Heart right ventricle (tissue), 16 donors: ENCODE measurements at regions of chr6 and their contacts with region 1.

Region 1: DNA sequence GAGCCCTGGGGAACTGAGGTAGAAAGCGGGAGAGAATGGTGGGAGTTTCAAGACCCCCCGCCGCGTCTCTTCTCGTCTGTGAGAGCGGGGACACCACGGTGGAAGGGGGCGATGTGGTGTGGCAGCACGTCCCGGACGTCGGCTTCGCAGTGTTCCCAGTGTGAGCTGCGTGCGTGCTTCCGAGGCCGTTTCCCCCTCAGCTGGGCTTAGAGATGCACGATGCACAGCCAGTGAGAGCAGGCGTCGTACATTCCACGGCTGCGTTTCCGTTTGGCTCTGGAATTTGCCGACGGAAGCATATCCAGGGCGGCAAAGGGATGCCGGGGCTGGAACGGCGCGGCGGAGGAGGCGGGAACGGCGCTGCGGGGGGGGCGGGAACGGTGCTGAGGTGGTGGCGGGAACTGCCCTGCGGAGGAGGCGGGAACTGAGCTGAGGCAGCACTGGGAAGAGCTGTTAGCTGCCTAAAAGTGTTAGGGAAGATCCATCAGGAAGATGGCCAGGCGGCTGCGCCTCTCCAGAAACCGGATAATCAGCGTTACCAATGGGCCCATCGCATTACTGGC is 37.7 kb downstream of the KIF25 start:
- DNase-seq: peak; percentile 74 to 84
- ATAC-seq: peak; percentile 55 to 77 (median 69)
- H3K4me3 ChIP-seq: peak overlapping the region in 9 of 10 donors; percentile 23 to 58 (median 45)
- H3K27ac ChIP-seq: peak overlapping the region; percentile 79 to 96 (median 86)
- H3K4me1 ChIP-seq: peaks cover 0 to 78% (median 61%) of the 10 kb centered on the region in 9 donors
- H3K27me3 ChIP-seq: peaks cover 0 to 18% (median 0%) of the 10 kb centered on the region in 7 donors
- CTCF ChIP-seq: no peak

Region 2: GRCh38 chr6:167932468-167933276 is 102.5 kb before region 1 on chr6:
- intact Hi-C with region 1: loop called in 4 of 10 experiments (anchors 2 to 10 kb)
- DNase-seq: no peak
- ATAC-seq: no peak
- H3K4me3 ChIP-seq: no peak overlapping the region
- H3K27ac ChIP-seq: peak overlapping the region in 7 of 10 donors; percentile 11 to 91 (median 81)
- H3K4me1 ChIP-seq: peaks cover 0 to 27% (median 23%) of the 10 kb centered on the region in 9 donors
- H3K27me3 ChIP-seq: no peaks in the 10 kb centered on the region
- CTCF ChIP-seq: no peak

Region 3: DNA sequence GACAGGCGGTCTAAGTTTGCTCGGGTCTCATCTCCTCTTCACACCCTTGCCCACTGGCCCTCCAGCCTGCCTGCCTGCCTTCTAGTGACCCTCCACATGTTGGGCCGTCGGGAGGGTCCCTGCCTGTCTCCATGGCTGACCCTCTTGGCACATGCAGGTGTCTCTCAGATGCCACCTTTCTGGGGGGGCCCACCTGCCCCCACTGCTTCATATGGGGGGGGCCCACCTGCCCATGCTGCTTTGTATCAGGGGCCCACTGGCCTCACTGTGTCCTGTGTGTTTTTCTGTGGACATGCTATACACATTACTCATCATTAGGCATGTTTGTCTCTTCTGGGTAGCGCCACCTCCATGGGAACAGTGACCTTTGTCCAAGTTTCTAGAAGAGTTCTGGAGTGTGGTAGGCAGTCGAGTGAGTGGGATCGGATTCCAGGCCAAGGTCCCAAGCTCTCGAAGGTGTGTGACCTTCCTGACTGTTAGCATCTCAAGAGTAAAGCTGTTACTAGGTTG is 78.1 kb before region 1 on chr6:
- intact Hi-C with region 1: loop called in 1 of 10 experiments (anchors 10 kb)
- DNase-seq: no peak
- ATAC-seq: peak in 7 of 8 donors; percentile 22 to 82 (median 62)
- H3K4me3 ChIP-seq: no peak overlapping the region
- H3K27ac ChIP-seq: peak overlapping the region in 2 of 10 donors; percentile 11 to 32
- H3K4me1 ChIP-seq: peaks cover 0 to 69% (median 24%) of the 10 kb centered on the region in 9 donors
- H3K27me3 ChIP-seq: no peaks in the 10 kb centered on the region
- CTCF ChIP-seq: no peak

Region 4: GRCh38 chr6:167968091-167968490 is 67.1 kb before region 1 on chr6:
- intact Hi-C with region 1: loop called in 4 of 10 experiments (anchors 2 to 5 kb)
- DNase-seq: no peak
- ATAC-seq: no peak
- H3K4me3 ChIP-seq: no peak overlapping the region
- H3K27ac ChIP-seq: peak overlapping the region in 1 of 10 donors; percentile 73
- H3K4me1 ChIP-seq: peaks cover 5 to 48% (median 14%) of the 10 kb centered on the region in 9 donors
- H3K27me3 ChIP-seq: no peaks in the 10 kb centered on the region
- CTCF ChIP-seq: peak in 8 of 9 donors; percentile 13 to 52 (median 44)

Region 5: GRCh38 chr6:167974640-167975344 is 60.4 kb before region 1 on chr6:
- intact Hi-C with region 1: loop called in 4 of 10 experiments (anchors 2 to 5 kb)
- DNase-seq: no peak
- ATAC-seq: peak in 5 of 8 donors; percentile 14 to 35 (median 18)
- H3K4me3 ChIP-seq: no peak overlapping the region
- H3K27ac ChIP-seq: peak overlapping the region in 1 of 10 donors; percentile 7
- H3K4me1 ChIP-seq: peaks cover 0 to 24% (median 8%) of the 10 kb centered on the region in 9 donors
- H3K27me3 ChIP-seq: no peaks in the 10 kb centered on the region
- CTCF ChIP-seq: no peak

Region 6: DNA sequence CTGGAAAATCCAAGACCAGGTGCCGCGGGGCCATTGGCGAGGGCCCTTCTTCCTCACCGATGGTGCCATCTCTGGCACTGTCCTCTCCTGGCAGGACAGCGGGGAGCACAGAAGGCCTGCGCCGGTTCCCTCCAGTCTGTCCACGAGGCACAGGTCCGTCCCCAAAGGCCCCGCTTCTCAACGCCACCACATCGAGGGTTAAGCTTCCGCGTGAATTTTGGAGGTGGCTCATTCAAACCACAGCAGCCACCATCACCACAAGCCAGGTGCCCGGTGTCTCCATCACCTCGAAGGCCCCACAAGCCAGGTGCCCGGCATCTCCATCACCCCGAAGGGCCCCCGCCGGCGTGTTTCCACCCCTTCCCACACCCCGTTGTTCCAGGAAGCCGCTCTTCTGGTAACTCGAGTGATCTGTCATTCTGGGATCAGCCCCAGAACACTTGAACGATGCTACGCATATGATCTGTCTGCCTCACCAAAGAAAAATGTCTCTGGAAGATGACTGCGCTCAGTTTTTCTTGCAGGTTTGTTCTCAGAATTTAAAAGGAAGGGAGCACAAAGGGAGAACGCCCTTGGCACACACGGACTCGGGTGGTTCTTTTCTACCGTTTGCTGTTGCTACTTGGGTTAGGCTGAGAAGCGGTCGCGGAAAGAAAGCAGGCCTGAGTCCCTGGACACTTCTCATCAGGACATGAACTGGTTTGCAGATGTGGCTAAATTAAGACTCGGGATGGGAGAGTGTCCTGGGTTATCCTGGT is 47.6 kb before region 1 on chr6:
- intact Hi-C with region 1: loop called in 4 of 10 experiments (anchors 2 to 5 kb)
- DNase-seq: no peak
- ATAC-seq: peak in 6 of 8 donors; percentile 36 to 52 (median 46)
- H3K4me3 ChIP-seq: no peak overlapping the region
- H3K27ac ChIP-seq: peak overlapping the region in 9 of 10 donors; percentile 44 to 83 (median 61)
- H3K4me1 ChIP-seq: peaks cover 0 to 26% (median 0%) of the 10 kb centered on the region in 9 donors
- H3K27me3 ChIP-seq: no peaks in the 10 kb centered on the region
- CTCF ChIP-seq: no peak

Region 7: DNA sequence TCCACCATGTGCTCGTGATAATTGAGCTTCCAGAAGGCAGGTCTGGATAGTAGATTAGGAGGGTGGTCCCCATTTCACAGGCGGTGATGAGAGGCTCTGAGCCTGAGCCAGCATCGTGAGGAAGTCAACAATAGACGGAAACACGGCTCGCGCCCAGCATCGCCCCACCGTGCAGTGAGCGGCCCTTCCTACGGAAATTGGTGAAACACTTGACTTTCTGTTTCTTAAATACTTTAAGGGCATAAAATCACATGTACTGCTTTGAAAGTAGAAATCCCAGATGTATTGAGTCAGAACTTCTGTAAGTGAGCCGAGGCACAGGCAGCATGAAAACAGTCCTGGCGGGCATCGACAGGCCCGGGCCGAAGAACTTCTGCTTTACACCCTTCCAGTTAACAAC is 42.0 kb before region 1 on chr6:
- intact Hi-C with region 1: loop called in 4 of 10 experiments (anchors 2 to 5 kb)
- DNase-seq: peak; percentile 69 to 79
- ATAC-seq: peak; percentile 77 to 96 (median 92)
- H3K4me3 ChIP-seq: no peak overlapping the region
- H3K27ac ChIP-seq: peak overlapping the region in 9 of 10 donors; percentile 35 to 86 (median 66)
- H3K4me1 ChIP-seq: peaks cover 0 to 31% (median 8%) of the 10 kb centered on the region in 9 donors
- H3K27me3 ChIP-seq: peaks cover 0 to 5% (median 0%) of the 10 kb centered on the region in 7 donors
- CTCF ChIP-seq: no peak